Panc1 (cell line): ENCODE measurements at regions of chr10 and their contacts with region 1.

Region 1: GRCh38 chr10:114571316-114571989 is 86.6 kb downstream of the ABLIM1 start:
- DNase-seq: no peak
- ATAC-seq: no peak
- H3K4me3 ChIP-seq: no peak overlapping the region
- H3K27ac ChIP-seq: peak overlapping the region; percentile 20; the same call in 1 of the 2 replicates
- H3K4me1 ChIP-seq: peaks cover 18% of the 10 kb centered on the region
- H3K27me3 ChIP-seq: no peaks in the 10 kb centered on the region
- CTCF ChIP-seq: no peak

Region 2: GRCh38 chr10:114220281-114220680 is 351.2 kb before region 1 on chr10:
- CTCF ChIA-PET with region 1: no interaction called
- POLR2A ChIA-PET with region 1: no interaction called
- in situ Hi-C with region 1: no loop called
- intact Hi-C with region 1: no loop called
- DNase-seq: no peak
- ATAC-seq: no peak
- H3K4me3 ChIP-seq: no peak overlapping the region
- H3K27ac ChIP-seq: no peak overlapping the region
- H3K4me1 ChIP-seq: no peaks in the 10 kb centered on the region
- H3K27me3 ChIP-seq: peaks cover 30% of the 10 kb centered on the region
- CTCF ChIP-seq: no peak

Region 3: GRCh38 chr10:114486938-114487814 is 84.3 kb before region 1 on chr10:
- CTCF ChIA-PET with region 1: no interaction called
- POLR2A ChIA-PET with region 1: no interaction called
- in situ Hi-C with region 1: no loop called
- intact Hi-C with region 1: no loop called
- DNase-seq: no peak
- ATAC-seq: no peak
- H3K4me3 ChIP-seq: no peak overlapping the region
- H3K27ac ChIP-seq: no peak overlapping the region
- H3K4me1 ChIP-seq: peaks cover 23% of the 10 kb centered on the region
- H3K27me3 ChIP-seq: no peaks in the 10 kb centered on the region
- CTCF ChIP-seq: peak; percentile 33

Region 4: GRCh38 chr10:114541081-114541796 is 30.2 kb before region 1 on chr10:
- CTCF ChIA-PET with region 1: interaction called, 12 read pairs
- POLR2A ChIA-PET with region 1: no interaction called
- in situ Hi-C with region 1: no loop called
- intact Hi-C with region 1: no loop called
- DNase-seq: no peak
- ATAC-seq: 0 out of 2 replicates have a peak, but pooled peaks have one; percentile 33
- H3K4me3 ChIP-seq: no peak overlapping the region
- H3K27ac ChIP-seq: no peak overlapping the region
- H3K4me1 ChIP-seq: no peaks in the 10 kb centered on the region
- H3K27me3 ChIP-seq: no peaks in the 10 kb centered on the region
- CTCF ChIP-seq: no peak

Region 5: DNA sequence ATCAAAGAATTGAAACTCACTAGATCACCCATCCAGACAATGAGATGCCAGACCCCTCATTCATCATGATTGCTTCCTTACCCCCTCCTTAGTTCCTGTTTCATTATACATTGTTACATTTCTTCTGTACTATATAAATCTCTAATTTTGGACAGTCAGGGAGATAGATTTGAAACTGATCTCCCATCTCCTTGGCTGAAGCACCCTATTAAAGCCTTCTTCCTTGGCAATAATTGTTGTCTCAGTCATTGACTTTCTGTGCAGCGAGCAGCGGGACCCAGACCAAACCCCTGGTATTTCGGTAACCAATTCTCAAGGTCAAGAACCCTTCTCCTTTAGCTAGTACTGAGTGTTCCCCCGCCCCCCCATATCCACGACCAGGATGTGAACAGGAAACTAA is 13.6 kb before region 1 on chr10:
- CTCF ChIA-PET with region 1: interaction called, 16 read pairs
- POLR2A ChIA-PET with region 1: no interaction called
- in situ Hi-C with region 1: no loop called
- intact Hi-C with region 1: no loop called
- DNase-seq: no peak
- ATAC-seq: no peak
- H3K4me3 ChIP-seq: no peak overlapping the region
- H3K27ac ChIP-seq: no peak overlapping the region
- H3K4me1 ChIP-seq: peaks cover 7% of the 10 kb centered on the region; the same call in 1 of the 2 replicates
- H3K27me3 ChIP-seq: no peaks in the 10 kb centered on the region
- CTCF ChIP-seq: no peak

Region 6: DNA sequence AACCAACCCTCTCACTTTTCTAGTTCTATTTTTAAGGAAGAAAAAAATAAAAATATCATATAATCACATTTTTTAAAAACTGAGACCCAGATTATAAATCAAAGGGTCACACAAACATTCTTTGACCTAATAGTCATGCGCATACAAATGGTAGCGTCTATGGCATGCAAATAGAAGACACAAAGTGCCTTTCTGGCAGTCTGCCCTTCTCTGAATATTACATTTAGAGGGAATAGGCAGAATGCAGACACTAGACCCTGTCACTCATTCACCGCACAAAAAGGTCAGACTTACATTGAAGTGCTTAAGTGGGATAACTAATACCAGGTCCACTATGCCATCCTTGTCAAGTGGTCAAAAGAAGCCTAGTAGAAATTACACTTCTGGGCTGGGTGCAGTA is 223.6 kb after region 1 on chr10:
- CTCF ChIA-PET with region 1: no interaction called
- POLR2A ChIA-PET with region 1: interaction called, 10 read pairs
- in situ Hi-C with region 1: no loop called
- intact Hi-C with region 1: no loop called
- DNase-seq: no peak
- ATAC-seq: no peak
- H3K4me3 ChIP-seq: no peak overlapping the region
- H3K27ac ChIP-seq: no peak overlapping the region
- H3K4me1 ChIP-seq: no peaks in the 10 kb centered on the region
- H3K27me3 ChIP-seq: no peaks in the 10 kb centered on the region
- CTCF ChIP-seq: no peak

Region 7: GRCh38 chr10:115417585-115418265 is 846.3 kb after region 1 on chr10:
- CTCF ChIA-PET with region 1: no interaction called
- POLR2A ChIA-PET with region 1: no interaction called
- in situ Hi-C with region 1: no loop called
- intact Hi-C with region 1: no loop called
- DNase-seq: peak; percentile 27
- ATAC-seq: peak; percentile 98
- H3K4me3 ChIP-seq: no peak overlapping the region
- H3K27ac ChIP-seq: no peak overlapping the region
- H3K4me1 ChIP-seq: no peaks in the 10 kb centered on the region
- H3K27me3 ChIP-seq: no peaks in the 10 kb centered on the region
- CTCF ChIP-seq: peak; percentile 78